PC-9 (cell line): ENCODE measurements at regions of chr20 and their contacts with region 1.

Region 1: GRCh38 chr20:59032023-59032712 is at the start of gene ATP5F1E:
- DNase-seq: peak; percentile 90 to 98
- H3K4me3 ChIP-seq: peak within 1 kb of the TSS; percentile 80
- H3K27ac ChIP-seq: peak within 1 kb of the TSS; percentile 68
- H3K4me1 ChIP-seq: peaks cover 51% of the 10 kb centered on the region
- H3K27me3 ChIP-seq: no peaks in the 10 kb centered on the region
- CTCF ChIP-seq: no peak
- total RNA-seq, gene ATP5F1E: 76.3 and 84.8 TPM in 2 replicates

Region 2: GRCh38 chr20:59010995-59011873 is 20.9 kb before region 1 on chr20:
- CTCF ChIA-PET with region 1: no interaction called
- POLR2A ChIA-PET with region 1: interaction called, 24 read pairs
- intact Hi-C with region 1: loop called (anchors 1 kb)
- DNase-seq: peak; percentile 90 to 91
- H3K4me3 ChIP-seq: peak overlapping the region; percentile 12; the same call in 1 of the 2 replicates
- H3K27ac ChIP-seq: peak overlapping the region; percentile 68
- H3K4me1 ChIP-seq: peaks cover 44% of the 10 kb centered on the region
- H3K27me3 ChIP-seq: no peaks in the 10 kb centered on the region
- CTCF ChIP-seq: no peak

Region 3: GRCh38 chr20:60037120-60037499 is 1004.9 kb after region 1 on chr20:
- CTCF ChIA-PET with region 1: no interaction called
- POLR2A ChIA-PET with region 1: no interaction called
- intact Hi-C with region 1: no loop called
- DNase-seq: no peak
- H3K4me3 ChIP-seq: no peak overlapping the region
- H3K27ac ChIP-seq: no peak overlapping the region
- H3K4me1 ChIP-seq: peaks cover 35% of the 10 kb centered on the region
- H3K27me3 ChIP-seq: no peaks in the 10 kb centered on the region
- CTCF ChIP-seq: no peak; the same call in 1 of the 2 replicates